BJ (cell line): ENCODE measurements at regions of chr5 and their contacts with region 1.

Region 1: GRCh38 chr5:39217365-39218281 is 1.7 kb downstream of the FYB1 start:
- DNase-seq: peak; percentile 14
- H3K4me3 ChIP-seq: no peak overlapping the region
- H3K27me3 ChIP-seq: no peaks in the 10 kb centered on the region
- CTCF ChIP-seq: peak; percentile 95

Region 2: GRCh38 chr5:38968665-38969064 is 249.0 kb before region 1 on chr5:
- CTCF ChIA-PET with region 1: no interaction called
- POLR2A ChIA-PET with region 1: no interaction called
- DNase-seq: no peak
- H3K4me3 ChIP-seq: no peak overlapping the region
- H3K27me3 ChIP-seq: no peaks in the 10 kb centered on the region
- CTCF ChIP-seq: no peak

Region 3: DNA sequence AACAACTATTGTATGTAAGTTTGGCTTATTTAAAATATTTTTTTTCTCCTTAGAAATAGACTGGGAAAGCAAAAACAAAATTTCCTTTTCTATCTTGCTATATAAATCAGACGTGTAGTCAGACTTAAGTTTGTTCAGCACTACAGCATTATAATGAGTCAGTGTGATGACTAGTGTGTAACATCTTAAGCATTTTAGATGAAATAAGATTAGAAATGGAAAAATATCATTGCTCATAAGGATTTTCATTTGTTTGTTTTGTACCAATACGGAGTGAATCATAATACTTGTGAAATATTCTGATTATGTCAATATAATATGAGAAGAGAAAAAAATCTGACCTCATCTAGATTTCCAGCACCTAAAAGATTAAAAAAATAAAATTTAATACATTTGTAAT is 78.7 kb before region 1 on chr5:
- CTCF ChIA-PET with region 1: no interaction called
- POLR2A ChIA-PET with region 1: no interaction called
- DNase-seq: peak; percentile 40
- H3K4me3 ChIP-seq: no peak overlapping the region
- H3K27me3 ChIP-seq: no peaks in the 10 kb centered on the region
- CTCF ChIP-seq: no peak

Region 4: GRCh38 chr5:39194466-39195136 is 23.0 kb before region 1 on chr5:
- CTCF ChIA-PET with region 1: interaction called, 13 read pairs
- POLR2A ChIA-PET with region 1: no interaction called
- DNase-seq: peak; percentile 54
- H3K4me3 ChIP-seq: no peak overlapping the region
- H3K27me3 ChIP-seq: no peaks in the 10 kb centered on the region
- CTCF ChIP-seq: no peak

Region 5: GRCh38 chr5:39201160-39201780 is 16.4 kb before region 1 on chr5:
- CTCF ChIA-PET with region 1: interaction called, 20 read pairs
- POLR2A ChIA-PET with region 1: no interaction called
- DNase-seq: no peak
- H3K4me3 ChIP-seq: no peak overlapping the region
- H3K27me3 ChIP-seq: no peaks in the 10 kb centered on the region
- CTCF ChIP-seq: no peak

Region 6: DNA sequence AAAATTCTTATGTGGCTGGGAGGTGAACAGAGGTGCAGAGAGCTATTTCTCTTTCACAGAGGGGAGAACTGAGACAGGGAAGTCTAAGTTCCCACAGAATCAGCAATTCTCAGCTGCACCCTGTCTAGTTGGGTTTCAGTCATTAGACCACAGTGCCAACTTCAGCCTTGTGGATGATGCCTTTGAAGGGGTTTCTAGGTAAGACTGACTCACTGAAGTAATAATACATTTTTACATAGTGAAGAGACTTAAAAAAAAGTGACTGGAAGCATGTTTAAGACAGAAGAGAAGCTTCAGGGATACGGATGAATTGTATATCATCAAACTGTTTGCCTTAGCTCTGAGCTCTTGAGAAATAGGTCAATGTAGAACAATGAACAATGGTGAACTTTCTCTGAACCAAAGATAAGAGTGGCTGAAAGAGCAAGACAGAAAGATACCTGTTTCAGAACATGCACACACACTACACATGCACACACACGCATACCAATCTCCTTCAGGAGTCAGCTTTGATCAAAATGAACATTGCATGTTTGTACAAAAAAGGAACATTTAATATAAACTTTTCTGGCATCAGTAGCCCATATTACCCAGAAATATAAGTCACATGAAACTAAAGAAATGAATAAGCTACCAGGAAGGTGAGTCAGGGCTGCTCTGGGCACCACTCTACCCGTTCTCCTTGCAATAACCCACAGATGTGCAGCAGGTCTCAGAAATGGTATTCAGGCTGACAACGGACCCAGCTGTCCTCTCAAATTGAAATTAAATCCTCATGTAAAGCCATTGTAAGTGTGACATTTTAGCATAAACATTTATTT is 14.3 kb after region 1 on chr5:
- CTCF ChIA-PET with region 1: interaction called, 24 read pairs
- POLR2A ChIA-PET with region 1: no interaction called
- DNase-seq: no peak
- H3K4me3 ChIP-seq: no peak overlapping the region
- H3K27me3 ChIP-seq: peaks cover 3% of the 10 kb centered on the region; the same call in 1 of the 2 replicates
- CTCF ChIP-seq: no peak

Region 7: GRCh38 chr5:39283231-39283818 is 65.7 kb after region 1 on chr5:
- CTCF ChIA-PET with region 1: interaction called, 22 read pairs
- POLR2A ChIA-PET with region 1: no interaction called
- DNase-seq: peak; percentile 4
- H3K4me3 ChIP-seq: no peak overlapping the region
- H3K27me3 ChIP-seq: no peaks in the 10 kb centered on the region
- CTCF ChIP-seq: peak; percentile 75

Region 8: GRCh38 chr5:39547553-39548154 is 330.0 kb after region 1 on chr5:
- CTCF ChIA-PET with region 1: interaction called, 23 read pairs
- POLR2A ChIA-PET with region 1: no interaction called
- DNase-seq: no peak
- H3K4me3 ChIP-seq: no peak overlapping the region
- H3K27me3 ChIP-seq: no peaks in the 10 kb centered on the region
- CTCF ChIP-seq: peak; percentile 67

Region 9: DNA sequence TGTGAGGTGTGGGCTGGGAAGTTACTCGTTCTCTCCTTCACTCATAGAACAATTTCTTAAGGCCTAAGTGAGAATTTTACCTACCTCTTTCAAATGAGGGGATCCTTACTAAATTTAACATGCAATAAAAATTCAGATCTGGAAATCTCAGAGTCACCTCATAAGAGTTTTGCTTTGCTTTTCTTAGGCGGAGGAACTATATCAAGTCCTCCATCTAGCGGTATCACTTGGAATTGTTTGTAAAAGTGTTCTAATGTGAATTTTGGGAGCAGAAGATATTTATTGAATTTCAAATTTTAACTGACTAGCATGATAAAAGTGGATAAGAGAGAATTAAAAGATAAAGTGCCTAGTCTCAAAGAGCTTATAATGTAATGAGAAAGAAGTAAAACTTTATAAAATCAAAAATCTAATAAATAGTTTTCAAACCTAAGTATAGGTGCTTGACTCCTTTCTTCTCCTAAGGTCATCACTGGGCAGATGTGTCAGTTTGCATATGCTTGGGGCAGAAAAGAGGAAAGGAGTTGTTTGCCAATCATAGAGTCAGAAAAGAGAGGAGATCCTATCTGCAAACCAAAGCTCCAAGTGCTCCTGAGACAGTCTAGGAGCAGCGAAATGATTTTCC is 352.9 kb after region 1 on chr5:
- CTCF ChIA-PET with region 1: interaction called, 56 read pairs
- POLR2A ChIA-PET with region 1: no interaction called
- DNase-seq: no peak
- H3K4me3 ChIP-seq: no peak overlapping the region
- H3K27me3 ChIP-seq: peaks cover 6% of the 10 kb centered on the region
- CTCF ChIP-seq: peak; percentile 63